ENCODE measurements at regions of chr13 and their contacts with region 1.

Region 1: GRCh38 chr13:27926644-27927434 is 7.0 kb downstream of the PDX1 start:
- DNase-seq: no peak
- ATAC-seq: no peak
- H3K4me3 ChIP-seq: no peak overlapping the region
- H3K4me3 Mint-ChIP-seq: peak overlapping the region in 8 of 10 donors; percentile 9 to 58 (median 36)
- H3K27ac ChIP-seq: no peak overlapping the region
- H3K27ac Mint-ChIP-seq: peak overlapping the region in 1 of 9 donors; percentile 60
- H3K4me1 ChIP-seq: no peaks in the 10 kb centered on the region
- H3K4me1 Mint-ChIP-seq: peaks cover 6 to 48% (median 43%) of the 10 kb centered on the region in 7 donors
- H3K27me3 ChIP-seq: peaks cover 0 to 20% of the 10 kb centered on the region in 2 donors
- H3K27me3 Mint-ChIP-seq: peaks cover 86 to 94% (median 88%) of the 10 kb centered on the region in 5 donors

Region 2: GRCh38 chr13:27783111-27783510 is 143.7 kb before region 1 on chr13:
- CTCF ChIA-PET with region 1: no interaction called
- POLR2A ChIA-PET with region 1: no interaction called
- intact Hi-C with region 1: no loop called
- DNase-seq: no peak
- ATAC-seq: no peak
- H3K4me3 ChIP-seq: no peak overlapping the region
- H3K4me3 Mint-ChIP-seq: no peak overlapping the region
- H3K27ac ChIP-seq: no peak overlapping the region
- H3K27ac Mint-ChIP-seq: peak overlapping the region in 1 of 9 donors; percentile 3
- H3K4me1 ChIP-seq: no peaks in the 10 kb centered on the region
- H3K4me1 Mint-ChIP-seq: no peaks in the 10 kb centered on the region
- H3K27me3 ChIP-seq: no peaks in the 10 kb centered on the region
- H3K27me3 Mint-ChIP-seq: peaks cover 33 to 59% (median 56%) of the 10 kb centered on the region in 5 donors

Region 3: GRCh38 chr13:27953676-27954405 is 27.0 kb after region 1 on chr13:
- CTCF ChIA-PET with region 1: no interaction called
- POLR2A ChIA-PET with region 1: no interaction called
- intact Hi-C with region 1: loop called in 1 of 2 experiments (anchors 2 kb)
- DNase-seq: peak in 8 of 9 donors; percentile 28 to 79 (median 54)
- ATAC-seq: peak; percentile 87
- H3K4me3 ChIP-seq: peak overlapping the region; percentile 35
- H3K4me3 Mint-ChIP-seq: peak overlapping the region; percentile 70 to 83 (median 78)
- H3K27ac ChIP-seq: no peak overlapping the region
- H3K27ac Mint-ChIP-seq: peak overlapping the region in 1 of 9 donors; percentile 38
- H3K4me1 ChIP-seq: no peaks in the 10 kb centered on the region
- H3K4me1 Mint-ChIP-seq: peaks cover 0 to 26% (median 15%) of the 10 kb centered on the region in 7 donors
- H3K27me3 ChIP-seq: peaks cover 0 to 16% of the 10 kb centered on the region in 2 donors
- H3K27me3 Mint-ChIP-seq: peaks cover 75 to 83% (median 77%) of the 10 kb centered on the region in 5 donors

Measured in naive thymus-derived CD4-positive, alpha-beta T cell (primary cell).